Mammary epithelial cell (primary cell): ENCODE measurements at regions of chr11 and their contacts with region 1.

Region 1: GRCh38 chr11:92865352-92865751 is 104.1 kb upstream of the MTNR1B start:
- DNase-seq: peak; percentile 52
- H3K4me3 ChIP-seq: no peak overlapping the region
- H3K27ac ChIP-seq: no peak overlapping the region
- H3K4me1 ChIP-seq: peaks cover 12% of the 10 kb centered on the region
- H3K27me3 ChIP-seq: no peaks in the 10 kb centered on the region
- CTCF ChIP-seq: no peak

Region 2: GRCh38 chr11:92794783-92795182 is 70.6 kb before region 1 on chr11:
- CTCF ChIA-PET with region 1: no interaction called
- dilution Hi-C with region 1: loop called (anchors 5 kb)
- in situ Hi-C with region 1: no loop called
- intact Hi-C with region 1: no loop called
- DNase-seq: no peak
- H3K4me3 ChIP-seq: no peak overlapping the region
- H3K27ac ChIP-seq: no peak overlapping the region
- H3K4me1 ChIP-seq: no peaks in the 10 kb centered on the region
- H3K27me3 ChIP-seq: no peaks in the 10 kb centered on the region
- CTCF ChIP-seq: no peak